Activated naive CD4-positive, alpha-beta T cell treated with anti-CD3 and anti-CD28 coated beads for 36 hours (primary cell): ENCODE measurements at regions of chr6 and their contacts with region 1.

Region 1: GRCh38 chr6:26537846-26538571 is at the start of gene HMGN4:
- DNase-seq: peak; percentile 82
- H3K4me3 Mint-ChIP-seq: peak within 1 kb of the TSS; percentile 87
- H3K27ac Mint-ChIP-seq: peak within 1 kb of the TSS; percentile 98
- H3K4me1 Mint-ChIP-seq: peaks cover 56% of the 10 kb centered on the region
- H3K27me3 Mint-ChIP-seq: no peaks in the 10 kb centered on the region
- total RNA-seq, gene HMGN4: 70.4 to 73.2 TPM

Region 2: DNA sequence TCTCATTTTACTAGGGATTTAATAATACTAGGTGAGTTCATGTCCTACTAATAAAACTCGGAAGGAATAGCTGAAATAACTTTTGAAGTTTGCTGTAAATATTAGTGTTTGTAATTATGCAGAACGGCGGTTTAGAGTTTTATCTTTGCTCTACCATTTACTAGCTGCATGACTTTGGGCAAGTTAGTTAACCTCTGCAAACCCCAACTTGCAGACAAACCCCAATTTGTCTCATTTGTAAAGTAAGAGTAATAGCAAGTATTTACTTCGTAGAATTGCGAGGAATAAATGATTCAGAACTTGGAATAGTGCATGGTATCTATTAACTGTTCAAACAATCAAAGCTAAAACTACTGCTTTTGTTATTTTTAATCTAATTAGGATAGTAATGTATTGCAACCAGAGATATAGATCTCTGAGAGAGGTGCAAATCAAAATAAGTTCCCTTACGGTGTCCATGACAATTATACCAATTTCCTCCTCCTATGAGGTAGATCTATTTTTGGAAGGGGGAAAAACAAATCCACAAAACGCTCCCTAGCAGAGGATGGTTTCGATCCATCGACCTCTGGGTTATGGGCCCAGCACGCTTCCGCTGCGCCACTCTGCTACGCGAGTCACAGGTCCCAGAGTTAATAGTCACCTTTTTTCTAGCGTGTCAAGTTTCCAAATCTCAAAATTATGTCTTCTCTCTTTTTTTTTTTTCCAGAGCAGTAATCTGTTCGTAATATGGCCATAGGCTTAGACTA is 208.1 kb before region 1 on chr6:
- CTCF ChIA-PET with region 1: no interaction called
- intact Hi-C with region 1: loop called (anchors 1 kb)
- DNase-seq: peak; percentile 81
- H3K4me3 Mint-ChIP-seq: peak overlapping the region; percentile 82
- H3K27ac Mint-ChIP-seq: peak overlapping the region; percentile 90
- H3K4me1 Mint-ChIP-seq: peaks cover 35% of the 10 kb centered on the region
- H3K27me3 Mint-ChIP-seq: peaks cover 28% of the 10 kb centered on the region

Region 3: GRCh38 chr6:26363882-26364701 is 173.9 kb before region 1 on chr6:
- CTCF ChIA-PET with region 1: no interaction called
- intact Hi-C with region 1: loop called (anchors 2 kb)
- DNase-seq: peak; percentile 34
- H3K4me3 Mint-ChIP-seq: no peak overlapping the region
- H3K27ac Mint-ChIP-seq: no peak overlapping the region
- H3K4me1 Mint-ChIP-seq: peaks cover 51% of the 10 kb centered on the region
- H3K27me3 Mint-ChIP-seq: no peaks in the 10 kb centered on the region

Region 4: GRCh38 chr6:26439657-26440056 is 98.4 kb before region 1 on chr6:
- CTCF ChIA-PET with region 1: no interaction called
- intact Hi-C with region 1: loop called (anchors 1 kb)
- DNase-seq: no peak
- H3K4me3 Mint-ChIP-seq: peak overlapping the region; percentile 96
- H3K27ac Mint-ChIP-seq: peak overlapping the region; percentile 95
- H3K4me1 Mint-ChIP-seq: peaks cover 35% of the 10 kb centered on the region
- H3K27me3 Mint-ChIP-seq: no peaks in the 10 kb centered on the region

Region 5: GRCh38 chr6:26520853-26521599 is 17.0 kb before region 1 on chr6:
- CTCF ChIA-PET with region 1: interaction called, 3 read pairs
- intact Hi-C with region 1: loop called (anchors 1 kb)
- DNase-seq: peak; percentile 90
- H3K4me3 Mint-ChIP-seq: peak overlapping the region; percentile 76
- H3K27ac Mint-ChIP-seq: peak overlapping the region; percentile 94
- H3K4me1 Mint-ChIP-seq: peaks cover 27% of the 10 kb centered on the region
- H3K27me3 Mint-ChIP-seq: peaks cover 2% of the 10 kb centered on the region

Region 6: DNA sequence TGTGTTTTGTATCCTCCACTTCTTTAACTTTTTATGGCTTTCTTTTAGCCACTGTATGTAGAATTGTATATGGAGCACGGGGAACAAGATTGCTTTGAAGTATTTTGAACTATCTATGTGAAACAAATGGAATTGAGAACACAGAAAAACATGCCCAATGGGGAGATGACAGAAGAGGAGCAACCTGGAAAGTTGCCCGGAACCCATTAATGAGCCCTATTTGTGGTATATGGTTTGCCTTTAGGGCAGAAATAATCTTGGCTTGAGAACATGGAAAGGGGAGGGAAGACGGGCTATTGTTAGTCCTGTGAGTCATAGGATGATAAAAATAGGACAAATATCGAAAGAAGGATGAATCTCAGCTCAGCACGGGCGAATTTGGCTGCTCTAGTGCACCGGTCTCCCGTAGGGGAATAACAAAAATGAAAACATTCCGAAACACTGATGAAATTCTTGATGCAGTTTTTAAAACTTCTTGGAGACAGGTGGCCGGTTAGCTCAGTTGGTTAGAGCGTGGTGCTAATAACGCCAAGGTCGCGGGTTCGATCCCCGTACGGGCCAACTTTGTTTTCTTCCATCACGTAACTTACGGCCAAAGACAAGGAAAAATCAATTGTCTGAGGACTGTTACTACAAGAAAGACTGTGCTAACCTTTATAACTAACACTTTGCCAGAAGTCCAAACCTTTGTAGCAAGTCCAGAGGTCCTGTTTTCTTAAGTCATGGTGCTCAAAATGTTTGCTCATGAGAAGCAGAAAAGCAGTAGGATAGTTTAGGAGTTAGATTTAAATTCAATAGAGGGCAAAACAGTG is 15.8 kb after region 1 on chr6:
- CTCF ChIA-PET with region 1: interaction called, 3 read pairs
- intact Hi-C with region 1: loop called (anchors 1 kb)
- DNase-seq: peak; percentile 91
- H3K4me3 Mint-ChIP-seq: no peak overlapping the region
- H3K27ac Mint-ChIP-seq: no peak overlapping the region
- H3K4me1 Mint-ChIP-seq: peaks cover 26% of the 10 kb centered on the region
- H3K27me3 Mint-ChIP-seq: no peaks in the 10 kb centered on the region

Region 7: GRCh38 chr6:26581164-26581915 is 43.3 kb after region 1 on chr6:
- CTCF ChIA-PET with region 1: no interaction called
- intact Hi-C with region 1: no loop called
- DNase-seq: no peak
- H3K4me3 Mint-ChIP-seq: no peak overlapping the region
- H3K27ac Mint-ChIP-seq: no peak overlapping the region
- H3K4me1 Mint-ChIP-seq: peaks cover 19% of the 10 kb centered on the region
- H3K27me3 Mint-ChIP-seq: peaks cover 8% of the 10 kb centered on the region